A673 (cell line): ENCODE measurements at regions of chr18 and their contacts with region 1.

Region 1: DNA sequence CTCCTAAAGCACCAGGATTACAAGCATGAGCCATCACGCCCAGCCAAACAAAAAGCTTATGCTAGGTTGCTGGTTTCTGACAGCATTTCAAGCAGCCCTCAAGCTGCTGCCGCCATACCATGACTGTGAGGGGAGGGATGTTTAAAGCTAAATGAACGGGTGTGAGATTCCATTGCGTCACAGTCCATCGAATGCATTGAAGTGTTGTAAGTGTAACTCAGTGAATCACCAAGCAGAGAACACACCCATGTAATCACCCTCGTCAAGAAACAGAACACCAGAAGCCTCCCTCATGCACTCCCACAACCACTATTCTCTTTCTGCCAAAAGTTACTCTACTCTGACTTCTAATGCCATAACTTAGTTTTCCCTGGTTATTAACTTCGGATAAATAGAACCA is 32.8 kb upstream of the MC5R start:
- DNase-seq: no peak
- H3K4me3 ChIP-seq: no peak overlapping the region
- H3K27ac ChIP-seq: no peak overlapping the region
- H3K4me1 ChIP-seq: no peaks in the 10 kb centered on the region
- H3K27me3 ChIP-seq: no peaks in the 10 kb centered on the region
- CTCF ChIP-seq: no peak

Region 2: GRCh38 chr18:12686100-12686499 is 1105.1 kb before region 1 on chr18:
- CTCF ChIA-PET with region 1: no interaction called
- POLR2A ChIA-PET with region 1: no interaction called
- intact Hi-C with region 1: no loop called
- DNase-seq: peak; percentile 49
- H3K4me3 ChIP-seq: no peak overlapping the region
- H3K27ac ChIP-seq: no peak overlapping the region
- H3K4me1 ChIP-seq: no peaks in the 10 kb centered on the region
- H3K27me3 ChIP-seq: no peaks in the 10 kb centered on the region
- CTCF ChIP-seq: peak; percentile 39

Region 3: DNA sequence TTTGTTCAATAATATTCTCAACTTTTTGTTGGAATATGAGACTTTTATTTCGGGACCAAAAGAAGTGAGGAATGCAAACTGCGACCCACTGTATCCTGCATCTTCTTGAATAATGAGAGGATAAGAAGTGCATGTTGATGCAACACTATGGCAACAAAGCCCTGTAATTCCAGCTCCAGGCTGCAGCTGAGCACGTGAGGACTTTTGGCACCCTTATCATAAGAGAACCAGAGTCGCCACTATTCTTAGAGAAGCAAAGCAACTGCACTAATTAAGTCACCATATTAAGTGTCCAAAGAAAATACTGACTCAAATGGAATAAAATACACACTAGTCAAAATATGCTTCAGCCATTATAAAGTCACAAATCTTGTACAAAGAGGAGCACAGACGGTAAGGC is 130.7 kb before region 1 on chr18:
- CTCF ChIA-PET with region 1: no interaction called
- POLR2A ChIA-PET with region 1: no interaction called
- intact Hi-C with region 1: loop called (anchors 5 kb)
- DNase-seq: no peak
- H3K4me3 ChIP-seq: no peak overlapping the region
- H3K27ac ChIP-seq: no peak overlapping the region
- H3K4me1 ChIP-seq: peaks cover 11% of the 10 kb centered on the region
- H3K27me3 ChIP-seq: no peaks in the 10 kb centered on the region
- CTCF ChIP-seq: no peak

Region 4: GRCh38 chr18:13756261-13756660 is 34.9 kb before region 1 on chr18:
- CTCF ChIA-PET with region 1: no interaction called
- POLR2A ChIA-PET with region 1: no interaction called
- intact Hi-C with region 1: no loop called
- DNase-seq: no peak
- H3K4me3 ChIP-seq: no peak overlapping the region
- H3K27ac ChIP-seq: no peak overlapping the region
- H3K4me1 ChIP-seq: no peaks in the 10 kb centered on the region
- H3K27me3 ChIP-seq: no peaks in the 10 kb centered on the region
- CTCF ChIP-seq: no peak

Region 5: DNA sequence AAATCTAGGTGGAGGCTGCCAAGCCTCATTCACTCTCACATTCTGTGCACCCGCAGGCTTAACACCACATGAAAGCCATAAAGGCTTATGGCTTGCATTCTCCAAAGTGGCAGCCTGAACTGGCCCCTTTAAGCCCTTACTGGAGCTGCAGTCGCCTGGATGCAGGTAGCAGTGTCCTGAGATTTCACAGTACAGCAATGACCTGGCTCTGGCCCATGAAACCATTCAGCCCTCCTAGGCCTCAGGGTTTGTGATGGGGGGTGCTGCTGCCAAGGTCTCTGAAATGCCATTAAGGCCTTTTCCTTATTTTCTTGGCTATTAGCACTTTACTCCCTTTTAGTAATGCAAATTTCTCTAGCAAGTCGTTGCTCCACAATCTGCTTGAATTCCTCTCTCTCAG is 16.1 kb before region 1 on chr18:
- CTCF ChIA-PET with region 1: no interaction called
- POLR2A ChIA-PET with region 1: no interaction called
- intact Hi-C with region 1: no loop called
- DNase-seq: no peak
- H3K4me3 ChIP-seq: no peak overlapping the region
- H3K27ac ChIP-seq: no peak overlapping the region
- H3K4me1 ChIP-seq: no peaks in the 10 kb centered on the region
- H3K27me3 ChIP-seq: peaks cover under 1% of the 10 kb centered on the region
- CTCF ChIP-seq: no peak

Region 6: GRCh38 chr18:13823707-13824395 is 32.7 kb after region 1 on chr18 and contains the start of gene MC5R:
- CTCF ChIA-PET with region 1: no interaction called
- POLR2A ChIA-PET with region 1: no interaction called
- intact Hi-C with region 1: no loop called
- DNase-seq: peak; percentile 74
- H3K4me3 ChIP-seq: peak within 1 kb of the TSS; percentile 29
- H3K27ac ChIP-seq: no peak within 1 kb of the TSS
- H3K4me1 ChIP-seq: no peaks in the 10 kb centered on the region
- H3K27me3 ChIP-seq: peaks cover 35% of the 10 kb centered on the region
- CTCF ChIP-seq: peak; percentile 91
- total RNA-seq, gene MC5R: not detected in 2 replicates